A673 (cell line): ENCODE measurements at regions of chr2 and their contacts with region 1.

Region 1: GRCh38 chr2:179751163-179751809 is 110.1 kb downstream of the ZNF385B start:
- DNase-seq: peak; percentile 39
- H3K4me3 ChIP-seq: no peak overlapping the region
- H3K27ac ChIP-seq: no peak overlapping the region
- H3K4me1 ChIP-seq: no peaks in the 10 kb centered on the region
- H3K27me3 ChIP-seq: no peaks in the 10 kb centered on the region
- CTCF ChIP-seq: peak; percentile 76

Region 2: DNA sequence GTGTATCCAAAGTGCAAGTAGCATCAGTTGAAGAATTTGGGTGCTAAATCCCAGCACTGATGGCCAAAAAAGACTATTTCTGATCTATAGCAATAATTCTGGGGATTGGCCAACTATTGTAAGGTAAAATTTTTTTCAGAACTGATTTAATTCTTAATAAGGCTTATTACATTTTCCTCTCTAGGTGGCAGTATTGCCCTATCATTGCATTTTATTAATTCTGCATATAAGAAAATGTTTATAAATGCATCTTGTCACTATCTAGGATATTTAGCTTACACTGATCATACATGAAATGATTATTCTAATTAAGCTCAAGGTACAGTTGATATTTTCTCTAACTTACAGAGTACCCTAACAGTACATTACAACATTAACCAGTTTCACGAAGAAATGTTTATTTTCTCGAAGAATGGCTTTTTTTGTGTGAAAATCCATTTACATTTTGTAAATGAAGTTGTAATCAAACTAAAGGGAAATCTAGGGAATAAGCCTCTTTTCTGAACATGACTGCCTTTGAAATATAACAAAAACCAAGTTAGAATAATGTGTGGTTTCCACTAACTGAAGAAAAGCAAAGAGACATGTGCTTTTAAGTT is 955.1 kb before region 1 on chr2:
- CTCF ChIA-PET with region 1: no interaction called
- POLR2A ChIA-PET with region 1: no interaction called
- intact Hi-C with region 1: loop called (anchors 5 kb)
- DNase-seq: peak; percentile 41
- H3K4me3 ChIP-seq: no peak overlapping the region
- H3K27ac ChIP-seq: no peak overlapping the region
- H3K4me1 ChIP-seq: no peaks in the 10 kb centered on the region
- H3K27me3 ChIP-seq: peaks cover 11% of the 10 kb centered on the region
- CTCF ChIP-seq: peak; percentile 68

Region 3: DNA sequence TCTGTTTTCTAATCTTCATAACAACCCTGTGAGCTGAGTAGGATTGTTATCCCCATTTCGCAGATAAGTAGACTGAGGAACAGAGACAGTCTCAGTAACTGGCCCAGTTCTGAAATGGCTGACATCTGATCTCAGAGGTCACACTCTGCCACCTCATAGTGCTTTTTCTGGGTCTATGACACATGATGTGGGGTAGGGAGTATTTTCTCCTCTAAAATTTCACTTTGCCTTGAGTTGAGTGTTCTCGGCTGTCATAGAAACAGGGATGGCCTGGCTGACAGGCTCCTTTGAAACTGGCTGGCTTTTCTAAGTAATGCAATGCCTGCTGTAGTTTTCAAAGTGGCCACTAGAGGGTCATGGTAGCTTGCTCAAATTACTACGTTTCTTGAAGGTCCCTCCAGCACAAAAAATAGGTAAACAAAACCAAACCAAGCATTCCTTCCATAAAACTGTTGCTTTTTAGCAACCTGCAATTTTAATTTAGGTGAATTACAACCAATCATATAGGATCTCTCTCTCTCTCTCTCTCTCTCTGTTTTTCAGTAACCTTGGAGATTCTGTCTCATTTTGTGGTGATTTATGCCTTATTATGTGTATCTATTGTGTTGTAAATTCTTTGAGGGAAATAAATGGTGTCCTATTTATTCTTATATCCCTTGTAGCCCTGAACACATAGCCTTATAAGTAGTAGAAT is 859.9 kb before region 1 on chr2:
- CTCF ChIA-PET with region 1: no interaction called
- POLR2A ChIA-PET with region 1: no interaction called
- intact Hi-C with region 1: loop called (anchors 10 kb)
- DNase-seq: peak; percentile 72
- H3K4me3 ChIP-seq: no peak overlapping the region
- H3K27ac ChIP-seq: no peak overlapping the region
- H3K4me1 ChIP-seq: no peaks in the 10 kb centered on the region
- H3K27me3 ChIP-seq: no peaks in the 10 kb centered on the region
- CTCF ChIP-seq: peak; percentile 87

Region 4: DNA sequence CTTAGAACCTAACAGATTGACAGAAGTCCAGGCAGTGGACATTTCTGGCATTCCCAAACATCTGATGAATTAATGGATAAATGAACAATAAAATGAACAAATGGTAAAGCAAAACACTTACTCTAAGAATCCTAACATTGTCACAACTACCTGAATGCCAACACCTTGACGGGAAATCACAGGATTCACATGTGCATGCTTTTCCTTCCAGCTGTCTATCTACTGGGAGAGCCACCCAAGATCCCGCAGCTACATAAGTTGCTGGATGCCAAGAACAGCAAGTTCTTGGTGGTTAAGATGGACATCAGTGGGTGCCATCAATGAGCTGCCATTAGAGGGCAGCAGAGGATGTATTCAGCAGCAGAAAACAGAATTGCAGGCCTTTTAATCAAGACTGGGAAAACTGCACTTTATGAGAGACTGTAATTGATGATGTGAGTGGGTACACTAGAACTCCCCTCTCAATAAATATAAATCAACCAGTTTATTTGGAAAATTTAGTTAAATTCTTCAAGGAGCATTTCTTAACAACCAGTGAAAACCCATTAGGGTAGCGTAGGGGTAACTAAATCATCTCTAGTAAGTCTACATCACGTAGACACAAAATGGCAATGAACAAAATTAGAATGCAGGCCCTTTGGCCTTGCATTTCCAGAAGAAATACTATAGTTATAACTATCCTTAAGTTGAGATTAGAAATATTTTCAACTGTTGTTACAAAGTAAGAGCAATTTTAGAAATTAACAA is 532.3 kb before region 1 on chr2:
- CTCF ChIA-PET with region 1: no interaction called
- POLR2A ChIA-PET with region 1: no interaction called
- intact Hi-C with region 1: loop called (anchors 5 kb)
- DNase-seq: peak; percentile 80
- H3K4me3 ChIP-seq: no peak overlapping the region
- H3K27ac ChIP-seq: no peak overlapping the region
- H3K4me1 ChIP-seq: no peaks in the 10 kb centered on the region
- H3K27me3 ChIP-seq: no peaks in the 10 kb centered on the region
- CTCF ChIP-seq: peak; percentile 90

Region 5: DNA sequence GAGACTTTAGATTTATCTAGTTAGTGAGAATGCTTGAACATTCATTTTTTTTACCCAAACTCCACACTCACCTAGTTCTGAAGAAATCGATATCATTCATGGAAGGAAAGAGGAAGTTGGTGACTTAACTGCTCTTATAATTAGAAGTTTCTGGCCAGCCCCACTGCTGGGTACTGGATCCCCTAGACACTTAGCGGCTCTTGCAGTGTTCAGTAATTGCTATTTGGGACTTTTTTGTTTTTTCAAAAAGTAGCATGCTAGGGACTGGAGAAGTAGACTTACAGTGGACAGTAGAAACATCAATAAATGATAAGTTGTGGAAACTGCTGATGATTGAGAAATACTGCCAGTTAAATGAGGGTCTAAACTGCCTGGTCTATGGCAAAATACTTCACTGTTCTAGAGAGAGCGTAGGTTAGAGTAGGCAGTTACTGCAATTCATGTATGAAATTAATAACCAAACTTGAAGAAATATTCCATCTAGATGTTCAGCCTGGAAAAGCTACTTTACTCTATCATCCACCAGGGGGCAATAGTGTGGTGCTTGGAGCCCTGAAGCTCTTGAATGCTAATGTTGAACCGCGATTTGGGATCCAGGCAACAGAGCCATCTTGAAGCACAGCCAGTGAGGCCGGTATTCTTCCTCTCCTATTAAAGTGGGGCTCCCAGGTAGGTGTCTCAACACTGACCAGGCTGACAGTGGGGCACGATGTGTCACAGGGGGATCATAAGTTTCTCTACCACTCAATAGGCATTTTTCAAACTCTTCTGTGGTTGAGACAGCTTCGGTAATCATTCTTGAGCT is 340.5 kb before region 1 on chr2:
- CTCF ChIA-PET with region 1: no interaction called
- POLR2A ChIA-PET with region 1: no interaction called
- intact Hi-C with region 1: loop called (anchors 2 kb)
- DNase-seq: peak; percentile 73
- H3K4me3 ChIP-seq: no peak overlapping the region
- H3K27ac ChIP-seq: no peak overlapping the region
- H3K4me1 ChIP-seq: no peaks in the 10 kb centered on the region
- H3K27me3 ChIP-seq: no peaks in the 10 kb centered on the region
- CTCF ChIP-seq: peak; percentile 83

Region 6: GRCh38 chr2:179422037-179422643 is 329.1 kb before region 1 on chr2:
- CTCF ChIA-PET with region 1: no interaction called
- POLR2A ChIA-PET with region 1: no interaction called
- intact Hi-C with region 1: loop called (anchors 1 kb)
- DNase-seq: peak; percentile 58
- H3K4me3 ChIP-seq: no peak overlapping the region
- H3K27ac ChIP-seq: no peak overlapping the region
- H3K4me1 ChIP-seq: no peaks in the 10 kb centered on the region
- H3K27me3 ChIP-seq: peaks cover 15% of the 10 kb centered on the region
- CTCF ChIP-seq: peak; percentile 78

Region 7: GRCh38 chr2:180728928-180729559 is 977.8 kb after region 1 on chr2:
- CTCF ChIA-PET with region 1: no interaction called
- POLR2A ChIA-PET with region 1: no interaction called
- intact Hi-C with region 1: no loop called
- DNase-seq: peak; percentile 70
- H3K4me3 ChIP-seq: no peak overlapping the region
- H3K27ac ChIP-seq: no peak overlapping the region
- H3K4me1 ChIP-seq: peaks cover 15% of the 10 kb centered on the region
- H3K27me3 ChIP-seq: no peaks in the 10 kb centered on the region
- CTCF ChIP-seq: no peak